ENCODE measurements at regions of chr12 and their contacts with region 1.

Region 1: DNA sequence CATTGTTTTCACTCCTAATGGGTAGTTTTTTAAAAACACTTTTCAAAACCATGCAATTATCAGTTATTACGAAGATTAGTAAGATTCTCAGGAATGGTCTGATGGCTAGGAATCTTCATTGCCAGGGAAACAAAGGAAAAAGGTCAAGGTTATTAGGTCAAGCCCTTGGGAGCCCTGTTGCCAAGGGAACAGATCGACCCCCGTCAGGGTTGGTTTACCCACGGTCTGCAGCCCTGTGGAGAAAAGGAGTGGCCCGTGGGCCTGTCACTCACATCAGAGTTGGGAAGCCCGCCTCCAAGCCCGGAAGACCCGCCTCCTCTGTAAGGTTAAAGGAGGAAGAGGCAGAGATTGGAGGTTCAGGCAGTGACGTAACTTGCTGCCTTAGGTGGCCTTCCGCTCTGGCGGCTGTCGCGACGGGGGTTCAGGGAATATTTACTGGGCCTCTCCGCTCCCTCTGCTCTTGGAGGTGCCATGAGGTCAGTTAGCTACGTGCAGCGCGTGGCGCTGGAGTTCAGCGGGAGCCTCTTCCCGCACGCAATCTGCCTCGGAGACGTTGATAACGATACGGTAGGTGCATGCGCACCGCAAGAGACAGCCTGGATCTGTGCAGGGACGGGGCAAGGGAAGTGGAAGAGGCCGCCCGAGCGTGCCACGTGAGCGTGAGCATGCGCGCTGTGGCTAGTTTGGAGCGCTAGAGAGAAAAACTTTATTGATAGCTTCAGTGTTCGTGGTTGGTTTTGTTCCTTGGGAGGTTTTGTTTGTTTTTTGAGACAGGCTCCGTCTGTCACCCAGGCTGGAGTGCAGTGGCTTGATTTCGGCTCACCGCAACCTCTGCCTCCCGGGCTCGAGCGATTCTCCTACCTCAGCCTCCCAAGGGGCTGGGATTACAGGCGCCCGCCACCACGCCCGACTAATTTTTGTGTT is at the start of gene ITFG2:
- DNase-seq: peak; percentile 96 to 99 (median 98)
- H3K4me3 ChIP-seq: peak within 1 kb of the TSS; percentile 93 to 97
- H3K4me3 Mint-ChIP-seq: peak within 1 kb of the TSS; percentile 99 to 100 (median 99)
- H3K27ac ChIP-seq: peak within 1 kb of the TSS; percentile 90
- H3K27ac Mint-ChIP-seq: peak within 1 kb of the TSS; percentile 99 to 100 (median 100)
- H3K4me1 ChIP-seq: peaks cover 24% of the 10 kb centered on the region
- H3K4me1 Mint-ChIP-seq: peaks cover 12 to 37% (median 25%) of the 10 kb centered on the region in 4 donors
- H3K27me3 ChIP-seq: no peaks in the 10 kb centered on the region
- H3K27me3 Mint-ChIP-seq: peaks cover 0 to 4% of the 10 kb centered on the region in 2 donors
- total RNA-seq, gene ITFG2: 116 to 133 TPM

Region 2: DNA sequence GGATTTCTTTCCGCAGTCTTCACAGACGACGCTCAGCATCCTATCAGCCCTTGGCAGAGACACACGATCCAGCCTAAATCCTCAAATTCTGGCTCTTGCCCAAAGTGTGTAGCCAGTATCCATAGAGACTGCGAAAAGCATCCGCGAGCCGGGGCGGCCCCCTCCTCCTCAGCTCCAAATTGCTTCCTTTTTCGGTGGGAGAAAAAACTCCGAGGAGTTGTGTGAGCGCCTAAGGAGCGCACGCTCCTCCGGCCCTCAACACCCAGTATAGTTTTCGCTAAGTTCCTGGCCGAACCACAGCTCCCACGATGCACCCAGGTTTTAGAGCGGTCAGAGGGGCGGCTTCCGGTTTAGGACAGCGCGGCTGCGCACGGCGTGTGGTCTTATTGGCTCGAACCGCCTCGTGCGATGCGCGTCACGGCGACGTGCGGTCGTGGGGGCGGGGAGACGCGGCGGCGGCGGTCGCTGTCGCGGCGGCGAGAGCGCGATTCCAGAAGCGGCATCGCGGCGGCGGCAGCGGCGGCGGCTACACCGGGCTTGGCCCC is 1121.9 kb before region 1 on chr12 and contains the start of gene ADIPOR2:
- CTCF ChIA-PET with region 1: no interaction called
- POLR2A ChIA-PET with region 1: no interaction called
- intact Hi-C with region 1: loop called (anchors 2 kb)
- DNase-seq: peak; percentile 93 to 95 (median 94)
- H3K4me3 ChIP-seq: peak within 1 kb of the TSS; percentile 70 to 87
- H3K4me3 Mint-ChIP-seq: peak within 1 kb of the TSS; percentile 88 to 97 (median 93)
- H3K27ac ChIP-seq: peak within 1 kb of the TSS; percentile 73
- H3K27ac Mint-ChIP-seq: peak within 1 kb of the TSS; percentile 96 to 99 (median 99)
- H3K4me1 ChIP-seq: peaks cover 27% of the 10 kb centered on the region
- H3K4me1 Mint-ChIP-seq: peaks cover 26 to 53% (median 35%) of the 10 kb centered on the region in 4 donors
- H3K27me3 ChIP-seq: no peaks in the 10 kb centered on the region
- H3K27me3 Mint-ChIP-seq: peaks cover 0 to 1% of the 10 kb centered on the region in 2 donors
- total RNA-seq, gene ADIPOR2: 35.7 to 36.2 TPM

Region 3: DNA sequence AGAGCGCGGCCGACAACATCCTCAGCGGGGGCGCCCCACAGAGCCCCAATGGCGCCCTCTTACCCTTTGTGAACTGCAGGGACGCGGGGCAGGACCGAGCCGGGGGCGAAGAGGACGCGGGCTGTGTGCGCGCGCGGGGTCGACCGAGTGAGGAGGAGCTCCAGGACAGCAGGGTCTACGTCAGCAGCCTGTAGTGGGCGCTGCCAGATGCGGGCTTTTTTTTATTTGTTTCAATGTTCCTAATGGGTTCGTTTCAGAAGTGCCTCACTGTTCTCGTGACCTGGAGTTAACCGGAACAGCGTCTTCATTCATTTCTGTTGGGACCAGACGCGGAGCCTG is 121.6 kb before region 1 on chr12:
- CTCF ChIA-PET with region 1: interaction called, 4 read pairs
- POLR2A ChIA-PET with region 1: interaction called, 15 read pairs
- intact Hi-C with region 1: loop called (anchors 1 kb)
- DNase-seq: peak; percentile 55 to 70 (median 62)
- H3K4me3 ChIP-seq: peak overlapping the region; percentile 42 to 73
- H3K4me3 Mint-ChIP-seq: peak overlapping the region; percentile 89 to 96 (median 93)
- H3K27ac ChIP-seq: peak overlapping the region; percentile 62
- H3K27ac Mint-ChIP-seq: peak overlapping the region; percentile 79 to 96 (median 91)
- H3K4me1 ChIP-seq: peaks cover 34% of the 10 kb centered on the region
- H3K4me1 Mint-ChIP-seq: peaks cover 24 to 54% (median 40%) of the 10 kb centered on the region in 4 donors
- H3K27me3 ChIP-seq: no peaks in the 10 kb centered on the region
- H3K27me3 Mint-ChIP-seq: peaks cover 0 to 4% of the 10 kb centered on the region in 2 donors

Region 4: GRCh38 chr12:2794736-2795289 is 17.7 kb before region 1 on chr12 and contains the start of gene FKBP4:
- CTCF ChIA-PET with region 1: interaction called, 19 read pairs
- POLR2A ChIA-PET with region 1: interaction called, 39 read pairs
- intact Hi-C with region 1: loop called (anchors 1 kb)
- DNase-seq: peak; percentile 83 to 92 (median 86)
- H3K4me3 ChIP-seq: peak within 1 kb of the TSS; percentile 81 to 83
- H3K4me3 Mint-ChIP-seq: peak within 1 kb of the TSS; percentile 91 to 97 (median 94)
- H3K27ac ChIP-seq: peak within 1 kb of the TSS; percentile 55
- H3K27ac Mint-ChIP-seq: peak within 1 kb of the TSS; percentile 77 to 96 (median 90)
- H3K4me1 ChIP-seq: peaks cover 11% of the 10 kb centered on the region
- H3K4me1 Mint-ChIP-seq: peaks cover 11 to 36% (median 14%) of the 10 kb centered on the region in 4 donors
- H3K27me3 ChIP-seq: no peaks in the 10 kb centered on the region
- H3K27me3 Mint-ChIP-seq: no peaks in the 10 kb centered on the region
- total RNA-seq, gene FKBP4: 51.3 to 53.3 TPM

Region 5: DNA sequence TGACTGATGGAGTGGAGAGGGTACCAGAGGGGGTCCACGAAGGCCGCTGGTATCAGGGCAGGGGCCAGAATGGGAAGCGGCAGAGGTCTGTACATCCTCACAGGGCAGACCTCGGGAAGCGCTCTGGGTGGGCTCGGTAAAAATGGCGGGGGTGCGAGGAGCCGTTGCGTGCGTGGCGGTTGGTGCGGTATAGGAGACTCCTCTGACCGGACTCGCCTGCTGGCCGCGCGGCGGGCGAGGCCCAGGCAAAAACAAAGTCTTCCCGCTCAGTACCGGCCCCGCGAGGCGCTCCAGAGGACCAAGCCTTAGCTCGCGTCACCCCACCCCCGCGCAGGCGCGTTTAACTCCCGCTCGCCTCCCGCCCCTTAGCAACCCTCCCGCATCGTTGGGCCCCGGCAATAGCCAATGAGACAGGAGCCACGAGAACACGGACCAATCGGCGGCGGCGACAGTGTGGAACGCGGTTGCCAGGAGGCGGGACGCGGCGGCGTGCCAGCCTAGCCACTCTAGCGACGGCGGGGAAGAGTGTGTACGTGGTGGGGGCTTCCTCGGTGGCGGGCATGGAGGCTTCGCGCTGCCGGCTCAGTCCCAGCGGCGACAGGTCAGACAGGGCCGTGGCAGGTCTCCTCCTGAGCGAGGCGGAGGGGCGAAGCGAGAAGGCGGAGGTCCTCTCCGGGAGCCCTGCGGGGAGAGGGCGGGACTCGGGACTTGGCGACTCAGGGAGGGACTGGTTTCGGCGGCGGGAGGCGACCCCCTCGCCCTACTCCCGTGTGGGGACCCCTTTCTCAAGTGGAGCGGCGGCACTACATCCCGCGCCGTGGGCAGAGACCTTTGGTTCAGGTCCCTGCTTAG is 78.1 kb after region 1 on chr12 and contains the start of gene TULP3:
- CTCF ChIA-PET with region 1: interaction called, 3 read pairs
- POLR2A ChIA-PET with region 1: no interaction called
- intact Hi-C with region 1: loop called (anchors 1 kb)
- DNase-seq: peak; percentile 98 to 99 (median 98)
- H3K4me3 ChIP-seq: peak within 1 kb of the TSS; percentile 49 to 92
- H3K4me3 Mint-ChIP-seq: peak within 1 kb of the TSS; percentile 90 to 99 (median 96)
- H3K27ac ChIP-seq: peak within 1 kb of the TSS; percentile 83
- H3K27ac Mint-ChIP-seq: peak within 1 kb of the TSS; percentile 90 to 99 (median 93)
- H3K4me1 ChIP-seq: peaks cover 17% of the 10 kb centered on the region
- H3K4me1 Mint-ChIP-seq: peaks cover 17 to 37% (median 25%) of the 10 kb centered on the region in 4 donors
- H3K27me3 ChIP-seq: no peaks in the 10 kb centered on the region
- H3K27me3 Mint-ChIP-seq: peaks cover 0 to 2% of the 10 kb centered on the region in 2 donors
- total RNA-seq, gene TULP3: 6.7 to 9.1 TPM